ENCODE measurements at regions of chr21 and their contacts with region 1.

Region 1: DNA sequence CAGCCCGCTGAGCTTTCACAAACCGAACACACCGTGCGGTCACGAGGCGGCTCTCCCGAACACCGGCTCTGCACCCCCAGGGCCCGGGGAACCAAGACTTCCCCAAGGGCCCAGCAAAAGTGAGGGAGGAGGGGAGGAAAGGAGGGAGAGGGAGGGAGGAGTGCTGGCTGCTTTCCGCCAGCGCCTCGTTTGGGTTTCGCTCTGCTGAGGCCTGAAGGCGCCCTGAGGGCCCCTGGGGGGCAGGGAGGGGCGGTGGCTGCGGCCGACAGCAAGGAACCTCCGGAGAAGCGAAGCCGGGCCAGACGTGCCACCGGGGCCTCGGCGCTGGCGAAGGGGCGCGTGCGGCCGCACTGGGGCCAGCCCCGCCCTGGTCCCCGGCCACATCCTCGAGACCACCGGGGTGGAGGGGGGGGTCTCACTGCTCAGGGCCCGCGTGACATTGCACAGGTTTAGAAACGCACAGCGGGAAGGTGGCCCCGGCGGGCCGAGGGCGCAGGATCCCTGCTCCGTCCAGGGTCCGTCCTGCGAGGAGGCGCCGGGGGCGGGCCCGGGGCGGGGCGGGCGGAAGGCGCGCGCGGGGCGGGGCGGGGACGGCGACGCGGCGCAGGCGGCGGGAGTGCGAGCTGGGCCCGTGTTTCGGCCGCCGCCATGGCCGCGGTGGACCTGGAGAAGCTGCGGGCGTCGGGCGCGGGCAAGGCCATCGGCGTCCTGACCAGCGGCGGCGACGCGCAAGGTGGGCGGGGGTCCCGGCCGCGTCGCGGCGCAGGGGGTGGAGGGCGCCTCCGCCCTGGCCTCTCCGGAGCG is at the start of gene PFKL:
- DNase-seq: peak in 8 of 9 experiments; percentile 38 to 74 (median 56)
- ATAC-seq: peak; percentile 54
- H3K4me3 ChIP-seq: peak within 1 kb of the TSS; percentile 57 to 76
- H3K4me3 Mint-ChIP-seq: peak within 1 kb of the TSS; percentile 89
- H3K27ac ChIP-seq: peak within 1 kb of the TSS; percentile 48 to 55
- H3K27ac Mint-ChIP-seq: peak within 1 kb of the TSS; percentile 95
- H3K4me1 ChIP-seq: peaks cover 66% of the 10 kb centered on the region
- H3K4me1 Mint-ChIP-seq: peaks cover 55% of the 10 kb centered on the region
- H3K27me3 ChIP-seq: no peaks in the 10 kb centered on the region
- H3K27me3 Mint-ChIP-seq: no peaks in the 10 kb centered on the region
- CTCF ChIP-seq: no peak
- total RNA-seq, gene PFKL: 85.1 to 87.8 TPM

Region 2: GRCh38 chr21:44074311-44074958 is 225.2 kb before region 1 on chr21:
- CTCF ChIA-PET with region 1: interaction called, 5 read pairs
- POLR2A ChIA-PET with region 1: no interaction called
- intact Hi-C with region 1: loop called (anchors 5 kb)
- DNase-seq: peak in 7 of 9 experiments; percentile 27 to 79 (median 62)
- ATAC-seq: peak; percentile 90
- H3K4me3 ChIP-seq: no peak overlapping the region
- H3K4me3 Mint-ChIP-seq: peak overlapping the region; percentile 9
- H3K27ac ChIP-seq: peak overlapping the region in 1 of 2 experiments; percentile 12
- H3K27ac Mint-ChIP-seq: peak overlapping the region; percentile 77
- H3K4me1 ChIP-seq: peaks cover 11% of the 10 kb centered on the region
- H3K4me1 Mint-ChIP-seq: peaks cover 41% of the 10 kb centered on the region
- H3K27me3 ChIP-seq: no peaks in the 10 kb centered on the region
- H3K27me3 Mint-ChIP-seq: no peaks in the 10 kb centered on the region
- CTCF ChIP-seq: no peak

Region 3: GRCh38 chr21:44255519-44255981 is 44.1 kb before region 1 on chr21:
- CTCF ChIA-PET with region 1: no interaction called
- POLR2A ChIA-PET with region 1: no interaction called
- intact Hi-C with region 1: no loop called
- DNase-seq: no peak
- ATAC-seq: no peak
- H3K4me3 ChIP-seq: no peak overlapping the region
- H3K4me3 Mint-ChIP-seq: no peak overlapping the region
- H3K27ac ChIP-seq: no peak overlapping the region
- H3K27ac Mint-ChIP-seq: no peak overlapping the region
- H3K4me1 ChIP-seq: no peaks in the 10 kb centered on the region
- H3K4me1 Mint-ChIP-seq: no peaks in the 10 kb centered on the region
- H3K27me3 ChIP-seq: peaks cover 0 to 2% of the 10 kb centered on the region in 2 experiments
- H3K27me3 Mint-ChIP-seq: peaks cover 3% of the 10 kb centered on the region
- CTCF ChIP-seq: no peak